Heart left ventricle (tissue), 16 donors: ENCODE measurements at regions of chr7 and their contacts with region 1.

Region 1: GRCh38 chr7:71131256-71132126 is 453 bp upstream of the GALNT17 start:
- DNase-seq: peak; percentile 51 to 72 (median 68)
- ATAC-seq: peak; percentile 51 to 92 (median 86)
- H3K4me3 ChIP-seq: peak overlapping the region; percentile 48 to 73 (median 60)
- H3K27ac ChIP-seq: peak overlapping the region; percentile 61 to 91 (median 81)
- H3K4me1 ChIP-seq: peaks cover 0 to 18% (median 0%) of the 10 kb centered on the region in 12 donors
- H3K27me3 ChIP-seq: peaks cover 0 to 40% (median 8%) of the 10 kb centered on the region in 9 donors
- CTCF ChIP-seq: peak in 7 of 12 donors; percentile 5 to 43 (median 37)
- POLR2A ChIP-seq: no peak

Region 2: GRCh38 chr7:70856866-70857630 is 274.4 kb before region 1 on chr7:
- intact Hi-C with region 1: loop called in 1 of 10 experiments (anchors 10 kb)
- DNase-seq: peak; percentile 34 to 73 (median 50)
- ATAC-seq: peak in 1 of 4 donors; percentile 46
- H3K4me3 ChIP-seq: no peak overlapping the region
- H3K27ac ChIP-seq: no peak overlapping the region
- H3K4me1 ChIP-seq: no peaks in the 10 kb centered on the region
- H3K27me3 ChIP-seq: no peaks in the 10 kb centered on the region
- CTCF ChIP-seq: peak; percentile 77 to 97 (median 91)
- POLR2A ChIP-seq: no peak

Region 3: GRCh38 chr7:71182438-71182935 is 51.0 kb after region 1 on chr7:
- intact Hi-C with region 1: no loop called
- DNase-seq: no peak
- ATAC-seq: peak in 2 of 4 donors; percentile 20 to 34
- H3K4me3 ChIP-seq: no peak overlapping the region
- H3K27ac ChIP-seq: peak overlapping the region in 1 of 12 donors; percentile 2
- H3K4me1 ChIP-seq: peaks cover 0 to 6% (median 0%) of the 10 kb centered on the region in 12 donors
- H3K27me3 ChIP-seq: no peaks in the 10 kb centered on the region
- CTCF ChIP-seq: no peak
- POLR2A ChIP-seq: no peak

Region 4: GRCh38 chr7:71220210-71220695 is 88.8 kb after region 1 on chr7:
- intact Hi-C with region 1: loop called in 2 of 10 experiments (anchors 2 to 10 kb)
- DNase-seq: peak in 2 of 5 donors; percentile 34 to 54
- ATAC-seq: peak; percentile 93 to 97 (median 96)
- H3K4me3 ChIP-seq: no peak overlapping the region
- H3K27ac ChIP-seq: peak overlapping the region in 11 of 12 donors; percentile 44 to 88 (median 78)
- H3K4me1 ChIP-seq: peaks cover 0 to 5% (median 0%) of the 10 kb centered on the region in 12 donors
- H3K27me3 ChIP-seq: no peaks in the 10 kb centered on the region
- CTCF ChIP-seq: peak in 4 of 12 donors; percentile 10 to 26 (median 20)
- POLR2A ChIP-seq: no peak

Region 5: GRCh38 chr7:71325151-71325550 is 193.7 kb after region 1 on chr7:
- intact Hi-C with region 1: loop called in 1 of 10 experiments (anchors 10 kb)
- DNase-seq: no peak
- ATAC-seq: no peak
- H3K4me3 ChIP-seq: no peak overlapping the region
- H3K27ac ChIP-seq: no peak overlapping the region
- H3K4me1 ChIP-seq: peaks cover 0 to 25% (median 5%) of the 10 kb centered on the region in 12 donors
- H3K27me3 ChIP-seq: no peaks in the 10 kb centered on the region
- CTCF ChIP-seq: no peak
- POLR2A ChIP-seq: no peak

Region 6: GRCh38 chr7:71414490-71414889 is 283.0 kb after region 1 on chr7:
- intact Hi-C with region 1: loop called in 3 of 10 experiments (anchors 2 to 10 kb)
- DNase-seq: peak; percentile 66 to 88 (median 77)
- ATAC-seq: peak; percentile 53 to 84 (median 76)
- H3K4me3 ChIP-seq: no peak overlapping the region
- H3K27ac ChIP-seq: peak overlapping the region in 4 of 12 donors; percentile 12 to 63 (median 23)
- H3K4me1 ChIP-seq: peaks cover 0 to 11% (median 3%) of the 10 kb centered on the region in 12 donors
- H3K27me3 ChIP-seq: no peaks in the 10 kb centered on the region
- CTCF ChIP-seq: no peak
- POLR2A ChIP-seq: no peak

Region 7: GRCh38 chr7:71733107-71733870 is 601.8 kb after region 1 on chr7:
- intact Hi-C with region 1: loop called in 6 of 10 experiments (anchors 5 to 10 kb)
- DNase-seq: peak; percentile 65 to 89 (median 76)
- ATAC-seq: peak; percentile 57 to 87 (median 82)
- H3K4me3 ChIP-seq: peak overlapping the region in 7 of 12 donors; percentile 22 to 46 (median 36)
- H3K27ac ChIP-seq: no peak overlapping the region
- H3K4me1 ChIP-seq: peaks cover 0 to 6% (median 0%) of the 10 kb centered on the region in 12 donors
- H3K27me3 ChIP-seq: peaks cover 0 to 5% (median 0%) of the 10 kb centered on the region in 9 donors
- CTCF ChIP-seq: peak; percentile 80 to 92 (median 89)
- POLR2A ChIP-seq: no peak